Psoas muscle (tissue), 8 donors: ENCODE measurements at regions of chr5 and their contacts with region 1.

Region 1: GRCh38 chr5:146049014-146049703 is 56.2 kb downstream of the PLAC8L1 start:
- DNase-seq: no peak
- ATAC-seq: peak; percentile 55 to 83 (median 74)
- H3K4me3 ChIP-seq: no peak overlapping the region
- H3K27ac ChIP-seq: no peak overlapping the region
- H3K4me1 ChIP-seq: no peaks in the 10 kb centered on the region
- H3K27me3 ChIP-seq: peaks cover 0 to 4% (median 0%) of the 10 kb centered on the region in 3 donors
- CTCF ChIP-seq: peak; percentile 65

Region 2: DNA sequence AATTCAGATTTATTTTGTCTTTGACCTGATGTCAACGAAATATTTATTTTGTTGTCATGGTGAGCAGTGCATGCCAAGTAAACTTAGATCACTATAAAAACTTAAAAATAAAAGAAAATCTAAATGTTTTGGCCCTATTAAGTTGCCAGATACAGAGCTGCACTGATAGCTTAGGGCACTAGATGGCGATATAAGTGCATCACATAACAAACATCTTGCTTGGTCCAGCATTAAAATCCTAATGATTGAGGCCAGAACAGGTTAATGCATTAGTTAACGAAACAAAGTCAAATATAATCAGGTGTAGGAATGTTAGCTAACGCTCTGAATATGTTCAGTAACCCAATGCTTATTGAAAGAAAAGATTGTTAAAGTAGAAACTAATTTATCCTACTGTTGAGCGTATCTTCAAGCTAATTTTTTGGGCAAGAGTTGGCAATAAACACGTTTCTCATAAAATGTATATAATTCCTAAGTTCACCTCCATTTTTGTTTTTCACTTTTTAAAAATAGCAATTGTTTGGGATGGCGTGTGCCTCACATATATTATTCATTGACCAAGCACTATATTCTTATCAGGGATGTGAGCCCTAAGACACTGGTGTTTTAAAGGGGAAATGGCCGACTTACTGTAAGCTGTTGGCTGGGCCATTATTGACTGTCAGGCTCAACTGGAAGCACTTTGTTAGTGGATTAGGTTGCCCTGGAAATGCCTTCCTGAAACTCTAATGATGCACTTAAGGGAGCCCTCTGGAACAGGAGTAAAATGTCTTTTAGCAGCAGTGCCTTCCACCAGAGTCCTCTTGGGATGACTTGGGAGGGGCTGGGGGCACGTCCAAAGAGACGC is 1845.2 kb before region 1 on chr5:
- intact Hi-C with region 1: loop called in 1 of 2 experiments (anchors 10 kb)
- DNase-seq: no peak
- ATAC-seq: peak in 3 of 4 donors; percentile 37 to 87 (median 71)
- H3K4me3 ChIP-seq: no peak overlapping the region
- H3K27ac ChIP-seq: no peak overlapping the region
- H3K4me1 ChIP-seq: peaks cover 5% of the 10 kb centered on the region
- H3K27me3 ChIP-seq: peaks cover 0 to 20% (median 4%) of the 10 kb centered on the region in 3 donors
- CTCF ChIP-seq: peak; percentile 94

Region 3: DNA sequence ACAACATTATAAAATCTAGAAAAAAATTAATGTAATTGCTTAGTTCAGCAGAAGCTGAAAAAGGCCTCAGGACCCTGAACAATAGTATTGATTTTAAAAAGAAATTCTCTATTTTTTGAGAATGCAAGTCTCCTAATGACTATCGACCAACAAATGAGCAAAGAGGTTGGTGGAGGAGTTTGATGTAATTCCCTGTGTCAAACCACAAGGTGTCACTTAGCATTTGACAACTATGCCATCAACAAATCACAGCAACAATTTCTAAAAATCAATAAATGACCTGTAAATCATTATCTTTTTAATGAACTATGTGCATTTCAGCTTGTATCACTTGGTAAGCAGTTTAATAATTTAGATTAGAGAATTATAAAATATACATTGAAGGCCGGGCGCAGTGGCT is 347.8 kb before region 1 on chr5:
- intact Hi-C with region 1: loop called in 1 of 2 experiments (anchors 10 kb)
- DNase-seq: no peak
- ATAC-seq: no peak
- H3K4me3 ChIP-seq: no peak overlapping the region
- H3K27ac ChIP-seq: no peak overlapping the region
- H3K4me1 ChIP-seq: no peaks in the 10 kb centered on the region
- H3K27me3 ChIP-seq: no peaks in the 10 kb centered on the region
- CTCF ChIP-seq: no peak

Region 4: GRCh38 chr5:145847499-145848497 is 201.4 kb before region 1 on chr5:
- intact Hi-C with region 1: loop called in 1 of 2 experiments (anchors 10 kb)
- DNase-seq: no peak
- ATAC-seq: no peak
- H3K4me3 ChIP-seq: no peak overlapping the region
- H3K27ac ChIP-seq: no peak overlapping the region
- H3K4me1 ChIP-seq: no peaks in the 10 kb centered on the region
- H3K27me3 ChIP-seq: peaks cover 0 to 3% (median 0%) of the 10 kb centered on the region in 3 donors
- CTCF ChIP-seq: no peak

Region 5: DNA sequence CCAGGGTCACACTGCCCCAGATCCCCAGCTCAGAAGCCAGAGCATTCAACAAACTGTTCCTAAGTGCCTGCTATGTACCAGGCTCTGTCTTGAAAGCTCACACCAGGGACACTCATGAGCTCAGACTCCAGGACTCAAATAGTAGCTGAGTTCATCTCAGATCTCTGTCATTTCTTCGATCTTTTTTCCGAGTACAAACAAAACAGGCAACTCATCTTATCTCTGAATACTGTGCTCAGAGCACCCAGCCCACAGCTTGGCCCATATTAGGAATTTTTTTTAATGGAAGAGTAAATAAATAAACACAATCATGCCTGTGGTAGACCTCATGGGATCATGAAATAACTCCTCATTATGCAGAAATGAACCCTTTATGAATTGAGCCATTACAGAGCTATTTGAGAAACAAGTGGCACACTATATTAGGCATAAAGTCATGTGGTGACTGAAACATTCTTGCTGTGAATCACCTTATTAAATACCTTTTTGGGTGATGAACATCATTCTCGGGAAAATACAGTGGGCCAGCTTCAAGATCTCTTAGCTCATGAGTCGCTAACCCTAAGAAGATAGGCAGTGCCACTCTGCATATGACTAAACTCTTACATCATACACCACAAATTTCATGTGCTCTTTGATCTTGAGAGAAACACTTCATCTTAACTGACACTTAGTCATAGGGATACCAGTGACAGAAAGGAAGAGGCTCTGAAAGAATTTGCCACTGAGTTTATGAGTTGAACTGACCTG is 102.9 kb before region 1 on chr5:
- intact Hi-C with region 1: loop called in 1 of 2 experiments (anchors 5 kb)
- DNase-seq: peak; percentile 21 to 84
- ATAC-seq: peak; percentile 87 to 94 (median 92)
- H3K4me3 ChIP-seq: peak overlapping the region; percentile 8
- H3K27ac ChIP-seq: peak overlapping the region; percentile 85
- H3K4me1 ChIP-seq: peaks cover 43% of the 10 kb centered on the region
- H3K27me3 ChIP-seq: no peaks in the 10 kb centered on the region
- CTCF ChIP-seq: no peak